A549 (cell line): ENCODE measurements at regions of chr17 and their contacts with region 1.

Region 1: DNA sequence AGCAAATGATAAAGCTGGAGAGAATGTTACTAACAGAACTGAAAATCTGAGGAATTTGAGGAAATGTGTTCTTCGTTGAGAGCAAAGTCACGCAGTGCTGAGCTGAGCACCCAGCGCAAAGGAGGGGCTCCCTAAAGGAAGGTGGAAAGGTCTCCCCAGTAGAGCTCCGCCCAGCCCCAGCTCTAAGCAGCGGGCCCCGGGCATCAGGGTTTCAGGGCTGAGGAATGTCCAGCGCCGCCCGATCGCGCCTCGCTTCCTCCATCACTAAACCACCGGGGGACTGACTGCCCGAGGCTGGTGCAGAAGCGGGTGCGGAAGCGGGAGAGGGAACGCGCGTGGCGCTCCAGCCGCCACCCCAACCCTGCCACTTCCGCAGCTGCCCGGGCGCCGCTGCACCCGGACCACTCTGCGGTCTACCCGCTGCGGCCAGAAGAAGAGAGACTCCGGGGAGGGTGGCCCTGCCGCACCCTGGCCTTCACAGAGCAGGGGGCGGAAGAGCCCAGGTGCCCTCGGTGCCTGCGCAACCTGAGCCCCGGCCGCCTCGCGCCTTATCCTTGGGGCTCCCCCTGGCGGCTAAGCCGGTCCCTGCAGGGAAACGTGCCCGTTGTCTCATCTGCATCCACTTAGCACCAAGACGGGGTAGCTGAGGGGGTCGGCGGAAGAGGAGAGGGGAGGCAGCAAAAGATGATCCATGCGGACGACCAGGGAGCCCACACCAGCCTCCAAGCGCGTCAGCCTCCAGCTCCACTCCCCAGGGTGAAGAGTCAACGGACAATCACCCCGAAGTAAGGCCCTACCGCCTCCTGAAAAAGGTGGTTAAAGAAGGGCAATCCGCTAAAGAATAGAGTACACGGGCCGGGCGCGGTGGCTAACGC is 12.4 kb upstream of the GUCY2D start:
- DNase-seq: peak; percentile 88 to 97
- ATAC-seq: peak; percentile 90 to 93
- H3K4me3 ChIP-seq: peak overlapping the region; percentile 58
- H3K27ac ChIP-seq: peak overlapping the region; percentile 83 to 93
- H3K4me1 ChIP-seq: no peaks in the 10 kb centered on the region
- CTCF ChIP-seq: peak; percentile 97
- EP300 ChIP-seq: no peak
- POLR2A ChIP-seq: peak; percentile 76
- RAD21 ChIP-seq: peak; percentile 70 to 76

Region 2: DNA sequence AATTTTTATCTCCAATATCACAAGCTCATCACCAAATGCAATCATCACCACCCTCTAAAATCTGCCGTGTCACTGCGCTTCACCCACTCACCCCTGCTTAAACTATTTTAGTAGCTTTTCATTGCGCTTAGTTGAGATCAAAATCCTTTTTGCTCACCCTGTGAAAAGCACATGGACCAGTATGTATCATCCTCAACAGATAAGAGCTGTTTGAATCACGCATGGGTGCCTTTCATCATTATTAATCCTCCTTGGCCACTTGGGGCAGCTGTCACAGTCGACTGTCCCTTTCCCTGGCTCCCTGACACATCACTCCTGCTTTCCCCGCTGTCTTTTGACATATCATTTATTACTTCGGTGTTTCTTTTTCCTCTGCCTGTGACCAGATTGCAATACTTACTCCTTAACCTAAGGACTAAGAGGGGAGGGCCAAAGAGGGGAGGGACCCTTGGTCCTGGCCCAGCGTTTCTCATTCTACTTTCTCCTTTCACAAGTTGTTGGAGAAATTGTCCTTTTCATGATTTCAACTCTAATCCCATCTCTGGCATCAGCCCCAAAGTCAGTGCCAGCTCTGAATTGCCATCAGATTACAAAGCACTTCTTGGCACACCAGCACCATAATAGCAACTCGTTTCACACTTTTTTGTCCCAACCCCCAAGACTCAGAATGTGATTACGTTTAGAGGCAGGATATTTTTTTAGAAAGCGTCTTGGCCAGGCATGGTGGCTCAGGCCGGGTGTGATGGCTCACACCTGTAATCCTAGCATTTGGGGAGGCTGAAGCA is 164.6 kb before region 1 on chr17:
- CTCF ChIA-PET with region 1: interaction called, 65 read pairs
- POLR2A ChIA-PET with region 1: no interaction called
- DNase-seq: peak; percentile 47 to 67
- ATAC-seq: peak; percentile 70 to 78
- H3K4me3 ChIP-seq: no peak overlapping the region
- H3K27ac ChIP-seq: no peak overlapping the region
- H3K4me1 ChIP-seq: no peaks in the 10 kb centered on the region; the same call in 2 of the 3 replicates
- CTCF ChIP-seq: no peak
- EP300 ChIP-seq: no peak
- POLR2A ChIP-seq: no peak
- RAD21 ChIP-seq: no peak

Region 3: DNA sequence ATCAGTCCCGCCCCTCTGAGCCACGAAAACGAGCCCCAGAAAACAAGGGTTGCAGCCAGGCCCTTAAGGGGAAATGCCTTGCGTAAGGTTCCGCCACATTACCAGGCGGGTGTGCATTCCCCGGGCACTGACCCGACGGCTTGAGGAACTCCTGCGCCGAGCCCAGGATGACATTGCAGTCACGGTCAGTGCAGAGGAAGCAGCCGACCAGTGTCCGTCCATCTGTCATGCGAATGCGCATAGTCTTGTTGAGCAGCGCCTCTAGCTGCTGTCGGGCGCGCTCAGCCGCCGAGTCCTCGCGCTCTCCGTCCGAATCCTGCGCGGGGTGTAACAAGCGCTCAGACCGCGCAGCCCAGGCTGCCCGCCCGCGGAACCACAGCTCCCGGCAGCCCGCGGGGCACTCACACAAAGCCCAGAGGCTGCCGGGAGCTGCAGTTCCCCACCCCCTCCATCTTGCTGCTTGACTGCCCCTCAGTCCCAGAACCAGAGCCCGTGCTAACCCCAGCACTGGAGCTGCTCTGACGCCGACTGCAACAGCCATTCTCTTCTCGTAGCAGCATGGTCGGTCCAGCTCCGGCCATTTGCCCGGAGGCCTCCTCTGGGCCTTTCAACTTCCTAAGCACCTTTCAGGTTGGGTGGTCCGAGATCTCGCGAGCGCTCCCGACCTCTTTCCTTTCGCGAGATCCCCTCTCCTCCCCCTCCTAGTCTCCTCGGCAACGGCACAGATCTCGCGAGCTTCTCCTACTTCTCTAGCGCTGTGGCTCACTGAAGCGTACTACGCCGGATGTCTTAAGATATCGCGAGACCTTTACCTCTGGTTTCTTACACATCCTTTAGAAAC is 132.9 kb before region 1 on chr17 and contains the start of gene NAA38:
- CTCF ChIA-PET with region 1: interaction called, 248 read pairs
- POLR2A ChIA-PET with region 1: interaction called, 9 read pairs
- DNase-seq: peak; percentile 95 to 100
- ATAC-seq: peak; percentile 74 to 88
- H3K4me3 ChIP-seq: peak within 1 kb of the TSS; percentile 69
- H3K27ac ChIP-seq: peak within 1 kb of the TSS; percentile 91 to 98
- H3K4me1 ChIP-seq: peaks cover 23% of the 10 kb centered on the region
- CTCF ChIP-seq: peak; percentile 40
- EP300 ChIP-seq: no peak
- POLR2A ChIP-seq: peak; percentile 55
- RAD21 ChIP-seq: peak; percentile 32 to 56; a peak in 3 of 5 replicates
- polyA plus RNA-seq, gene NAA38: 98.9 and 102 TPM in 2 replicates

Region 4: GRCh38 chr17:7897773-7898172 is 92.2 kb before region 1 on chr17:
- CTCF ChIA-PET with region 1: interaction called, 151 read pairs
- POLR2A ChIA-PET with region 1: no interaction called
- DNase-seq: peak; percentile 55 to 72
- ATAC-seq: peak; percentile 87 to 92
- H3K4me3 ChIP-seq: no peak overlapping the region
- H3K27ac ChIP-seq: no peak overlapping the region
- H3K4me1 ChIP-seq: no peaks in the 10 kb centered on the region
- CTCF ChIP-seq: peak; percentile 64
- EP300 ChIP-seq: no peak
- POLR2A ChIP-seq: no peak
- RAD21 ChIP-seq: peak; percentile 81 to 88

Region 5: GRCh38 chr17:7931709-7932482 is 58.1 kb before region 1 on chr17 and contains the starts of genes CNTROB and TRAPPC1:
- CTCF ChIA-PET with region 1: interaction called, 470 read pairs
- POLR2A ChIA-PET with region 1: interaction called, 12 read pairs
- DNase-seq: peak; percentile 99 to 100
- ATAC-seq: peak; percentile 86 to 94
- H3K4me3 ChIP-seq: peak within 1 kb of the TSS; percentile 69
- H3K27ac ChIP-seq: peak within 1 kb of the TSS; percentile 86 to 89
- H3K4me1 ChIP-seq: peaks cover 21% of the 10 kb centered on the region
- CTCF ChIP-seq: no peak
- EP300 ChIP-seq: no peak
- POLR2A ChIP-seq: peak; percentile 72
- RAD21 ChIP-seq: no peak
- polyA plus RNA-seq, gene CNTROB: 23.2 and 28.3 TPM in 2 replicates
- polyA plus RNA-seq, gene TRAPPC1: 200 and 204 TPM in 2 replicates

Region 6: GRCh38 chr17:8005960-8006730 is 16.1 kb after region 1 on chr17:
- CTCF ChIA-PET with region 1: interaction called, 95 read pairs
- POLR2A ChIA-PET with region 1: no interaction called
- DNase-seq: peak in 1 of 2 experiments; percentile 64
- ATAC-seq: peak in 1 of 2 experiments; percentile 74; a peak in 3 of 6 replicates
- H3K4me3 ChIP-seq: no peak overlapping the region
- H3K27ac ChIP-seq: no peak overlapping the region
- H3K4me1 ChIP-seq: no peaks in the 10 kb centered on the region
- CTCF ChIP-seq: no peak
- EP300 ChIP-seq: no peak
- POLR2A ChIP-seq: no peak
- RAD21 ChIP-seq: no peak

Region 7: DNA sequence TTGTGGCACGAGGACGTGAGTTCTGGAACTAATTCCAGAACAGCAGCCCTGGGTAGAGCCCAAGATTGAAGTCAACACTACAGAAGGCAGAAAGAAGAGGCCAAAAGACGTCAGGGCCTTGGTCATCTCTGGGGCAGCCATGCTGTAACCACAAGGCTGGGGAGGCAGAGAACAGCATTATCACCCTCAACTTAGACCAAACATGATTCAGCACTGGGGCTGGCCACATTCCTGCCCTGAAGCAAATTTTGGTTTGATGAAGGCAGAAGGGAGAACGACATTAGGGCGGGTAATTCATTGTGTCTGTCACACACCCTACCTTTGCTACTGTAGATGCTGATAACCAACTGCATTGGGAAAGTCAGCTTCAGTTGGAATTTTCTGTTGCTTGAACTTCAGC is 39.1 kb after region 1 on chr17:
- CTCF ChIA-PET with region 1: interaction called, 16 read pairs
- POLR2A ChIA-PET with region 1: no interaction called
- DNase-seq: no peak
- ATAC-seq: peak in 1 of 2 experiments; percentile 32; a peak in 2 of 6 replicates
- H3K4me3 ChIP-seq: no peak overlapping the region
- H3K27ac ChIP-seq: no peak overlapping the region
- H3K4me1 ChIP-seq: peaks cover 7% of the 10 kb centered on the region; the same call in 2 of the 3 replicates
- CTCF ChIP-seq: no peak
- EP300 ChIP-seq: no peak
- POLR2A ChIP-seq: no peak
- RAD21 ChIP-seq: no peak

Region 8: GRCh38 chr17:8125157-8125946 is 135.3 kb after region 1 on chr17:
- CTCF ChIA-PET with region 1: no interaction called
- POLR2A ChIA-PET with region 1: no interaction called
- DNase-seq: peak; percentile 81 to 84
- ATAC-seq: peak in 1 of 2 experiments; percentile 18; a peak in 3 of 6 replicates
- H3K4me3 ChIP-seq: peak overlapping the region; percentile 56
- H3K27ac ChIP-seq: peak overlapping the region; percentile 73 to 86
- H3K4me1 ChIP-seq: peaks cover 19% of the 10 kb centered on the region
- CTCF ChIP-seq: no peak
- EP300 ChIP-seq: no peak; a peak in 1 of 5 replicates
- POLR2A ChIP-seq: no peak
- RAD21 ChIP-seq: 0 out of 5 replicates have a peak, but pooled peaks of 1 of the 2 experiments have one; percentile 5

Region 9: DNA sequence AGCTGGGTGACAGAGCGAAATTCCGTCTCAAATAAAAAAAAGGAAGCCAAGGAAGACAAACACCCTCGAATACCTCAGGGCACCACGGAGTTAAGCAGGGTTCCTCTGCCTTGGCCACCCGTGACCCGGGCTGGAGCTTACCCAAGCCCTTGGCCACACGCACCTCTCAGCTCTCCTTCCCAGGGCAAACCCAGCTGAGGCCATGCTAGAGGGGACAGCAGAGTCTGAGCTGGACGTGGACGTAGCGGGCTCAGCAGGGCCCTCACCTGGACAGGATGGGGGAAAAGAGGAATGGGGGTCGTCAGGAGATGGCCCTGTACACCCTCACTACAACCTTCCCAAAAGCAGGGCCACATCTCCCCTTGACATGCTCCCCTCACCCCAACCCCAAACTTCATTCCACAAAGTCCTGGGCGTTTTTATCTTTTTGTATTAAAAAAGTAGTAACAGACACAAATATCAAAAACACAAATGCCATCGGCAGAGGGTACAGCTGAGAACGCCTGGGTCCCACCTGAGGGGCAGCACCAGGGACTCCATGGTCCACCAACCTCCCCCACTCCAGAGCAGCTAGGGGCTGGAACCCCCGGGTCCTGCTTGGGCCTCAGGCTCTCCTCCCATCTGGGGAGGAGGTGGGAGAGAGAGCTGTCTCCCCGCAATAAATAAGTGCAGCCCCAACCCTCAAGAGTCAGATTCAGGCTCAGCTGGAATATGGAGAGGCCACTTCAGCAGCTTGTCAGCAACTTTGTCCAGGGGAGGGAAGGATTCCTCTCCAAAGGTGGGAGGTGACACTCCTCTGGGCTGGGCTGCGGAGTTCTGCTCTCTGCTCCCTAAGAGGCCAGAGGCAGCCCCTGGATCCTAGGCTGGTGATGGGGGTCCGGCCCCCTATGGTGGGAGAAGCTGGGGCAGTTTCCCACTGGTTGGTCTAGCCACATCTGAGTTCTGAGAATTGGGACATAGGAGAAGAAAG is 150.3 kb after region 1 on chr17:
- CTCF ChIA-PET with region 1: no interaction called
- POLR2A ChIA-PET with region 1: no interaction called
- DNase-seq: no peak
- ATAC-seq: no peak
- H3K4me3 ChIP-seq: no peak overlapping the region
- H3K27ac ChIP-seq: no peak overlapping the region
- H3K4me1 ChIP-seq: peaks cover 13% of the 10 kb centered on the region; the same call in 2 of the 3 replicates
- CTCF ChIP-seq: no peak
- EP300 ChIP-seq: no peak
- POLR2A ChIP-seq: no peak
- RAD21 ChIP-seq: no peak

Region 10: DNA sequence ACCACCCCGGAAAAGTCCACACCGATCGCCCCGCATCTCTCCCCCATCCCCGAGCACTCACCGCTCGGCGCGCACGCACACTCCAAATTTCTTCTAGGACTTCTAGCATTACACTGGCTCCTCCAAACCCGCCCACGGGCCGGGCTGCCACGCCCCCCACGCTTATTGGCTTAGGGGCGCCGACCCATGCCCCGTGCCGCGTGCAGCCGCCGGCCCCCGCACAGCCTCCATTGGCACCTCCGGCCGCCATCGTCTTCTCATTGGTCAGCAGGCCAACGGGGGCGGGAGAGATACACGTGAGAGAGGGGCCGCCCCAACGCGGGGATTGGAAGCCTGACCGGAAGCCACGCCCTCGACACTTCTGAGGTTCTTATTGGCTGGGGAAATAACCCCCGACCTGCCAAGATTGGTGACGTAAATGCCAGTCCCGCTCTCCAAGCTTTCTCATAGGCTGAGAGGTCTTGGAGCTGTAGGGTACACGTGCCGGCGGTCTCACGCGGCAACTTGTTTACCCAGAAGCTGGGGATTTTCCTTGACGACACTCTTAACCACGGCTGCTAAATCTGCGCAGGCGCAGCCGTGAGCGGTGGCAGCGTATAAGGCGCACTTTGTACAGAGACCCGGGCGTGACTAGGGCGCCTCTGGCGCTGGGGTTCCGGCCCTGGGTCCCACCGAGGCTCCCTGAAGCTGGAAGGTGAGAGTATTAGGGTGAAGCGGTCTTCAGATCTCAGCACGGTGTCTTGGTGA is 166.4 kb after region 1 on chr17:
- CTCF ChIA-PET with region 1: no interaction called
- POLR2A ChIA-PET with region 1: no interaction called
- DNase-seq: peak; percentile 100
- ATAC-seq: peak; percentile 57 to 73
- H3K4me3 ChIP-seq: peak overlapping the region; percentile 65
- H3K27ac ChIP-seq: peak overlapping the region; percentile 89 to 93
- H3K4me1 ChIP-seq: peaks cover 55% of the 10 kb centered on the region
- CTCF ChIP-seq: no peak
- EP300 ChIP-seq: no peak
- POLR2A ChIP-seq: peak; percentile 54
- RAD21 ChIP-seq: peak; percentile 33 to 40; a peak in 2 of 5 replicates

Region 11: DNA sequence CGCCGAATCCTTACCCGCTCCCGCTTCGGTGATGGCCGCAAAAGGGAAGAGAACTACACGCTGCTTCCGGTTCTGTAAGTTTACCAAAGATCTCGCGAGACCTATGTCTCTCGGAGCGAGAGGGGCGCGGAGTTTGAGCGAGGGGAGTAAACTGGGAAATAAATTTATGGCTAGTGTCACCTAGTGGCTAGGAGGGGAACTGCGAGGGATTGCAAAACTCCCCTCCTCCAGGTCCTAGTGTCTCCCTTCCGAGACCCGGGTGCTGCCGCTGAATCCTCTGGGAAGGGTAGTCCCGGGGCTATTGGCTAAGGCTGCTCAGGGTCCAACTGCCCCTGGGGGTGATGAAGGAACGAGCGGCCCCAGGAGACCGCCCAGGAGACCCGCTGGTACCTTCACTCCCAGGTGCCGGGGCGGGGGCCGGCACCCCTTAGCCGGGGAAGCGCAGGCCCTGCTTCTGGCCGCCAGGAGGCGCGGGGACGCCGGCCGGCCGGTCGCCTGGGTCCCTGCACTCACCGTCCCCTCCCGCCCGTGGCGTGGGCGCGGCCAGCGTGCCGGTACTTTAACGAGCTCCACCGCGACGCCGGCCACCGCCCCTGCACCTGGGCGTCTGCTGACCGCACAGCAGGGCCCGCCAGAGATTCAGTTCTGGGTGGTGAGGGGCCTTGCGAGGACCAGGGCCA is 393.3 kb after region 1 on chr17 and contains the start of gene RPL26:
- CTCF ChIA-PET with region 1: no interaction called
- POLR2A ChIA-PET with region 1: no interaction called
- DNase-seq: peak; percentile 97 to 99
- ATAC-seq: peak; percentile 91 to 93
- H3K4me3 ChIP-seq: peak within 1 kb of the TSS; percentile 97
- H3K27ac ChIP-seq: peak within 1 kb of the TSS; percentile 93 to 99
- H3K4me1 ChIP-seq: peaks cover 44% of the 10 kb centered on the region
- CTCF ChIP-seq: peak; percentile 99
- EP300 ChIP-seq: no peak
- POLR2A ChIP-seq: peak; percentile 98
- RAD21 ChIP-seq: peak; percentile 26 to 86
- polyA plus RNA-seq, gene RPL26: 6,286 and 7,141 TPM in 2 replicates